Mammary epithelial cell (primary cell): ENCODE measurements at regions of chr14 and their contacts with region 1.

Region 1: GRCh38 chr14:87547536-87547935 is 445.4 kb downstream of the GALC start:
- DNase-seq: no peak
- H3K4me3 ChIP-seq: no peak overlapping the region
- H3K27ac ChIP-seq: no peak overlapping the region
- H3K4me1 ChIP-seq: no peaks in the 10 kb centered on the region
- H3K27me3 ChIP-seq: peaks cover 2% of the 10 kb centered on the region
- CTCF ChIP-seq: no peak

Region 2: GRCh38 chr14:87483271-87484260 is 64.0 kb before region 1 on chr14:
- CTCF ChIA-PET with region 1: no interaction called
- dilution Hi-C with region 1: loop called (anchors 5 kb)
- in situ Hi-C with region 1: no loop called
- intact Hi-C with region 1: no loop called
- DNase-seq: peak; percentile 76
- H3K4me3 ChIP-seq: no peak overlapping the region
- H3K27ac ChIP-seq: peak overlapping the region; percentile 59
- H3K4me1 ChIP-seq: peaks cover 17% of the 10 kb centered on the region
- H3K27me3 ChIP-seq: no peaks in the 10 kb centered on the region
- CTCF ChIP-seq: no peak